Posterior vena cava (tissue), 2 donors: ENCODE measurements at regions of chr10 and their contacts with region 1.

Region 1: DNA sequence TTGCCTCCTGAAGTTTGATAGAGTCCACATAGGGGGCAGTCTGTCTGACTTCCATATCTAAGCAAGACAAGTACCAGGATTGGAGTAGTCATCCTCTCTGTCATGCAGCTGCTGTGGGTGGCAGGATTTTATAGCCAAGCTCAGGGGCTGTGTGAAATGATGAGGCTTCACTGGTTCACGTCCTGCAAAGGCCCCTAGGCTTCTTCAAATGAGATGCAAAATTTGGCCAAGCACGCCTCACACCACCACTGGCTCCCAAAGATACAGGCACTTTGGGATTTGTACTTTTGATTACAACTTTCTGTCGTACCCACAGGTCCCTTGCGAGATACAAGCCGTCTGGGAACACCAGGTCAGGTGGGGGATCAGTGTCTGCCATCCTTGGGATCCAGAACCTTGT is 67.1 kb downstream of the WDFY4 start:
- DNase-seq: no peak

Region 2: GRCh38 chr10:48634198-48634983 is 117.3 kb before region 1 on chr10:
- intact Hi-C with region 1: no loop called
- DNase-seq: peak; percentile 88

Region 3: DNA sequence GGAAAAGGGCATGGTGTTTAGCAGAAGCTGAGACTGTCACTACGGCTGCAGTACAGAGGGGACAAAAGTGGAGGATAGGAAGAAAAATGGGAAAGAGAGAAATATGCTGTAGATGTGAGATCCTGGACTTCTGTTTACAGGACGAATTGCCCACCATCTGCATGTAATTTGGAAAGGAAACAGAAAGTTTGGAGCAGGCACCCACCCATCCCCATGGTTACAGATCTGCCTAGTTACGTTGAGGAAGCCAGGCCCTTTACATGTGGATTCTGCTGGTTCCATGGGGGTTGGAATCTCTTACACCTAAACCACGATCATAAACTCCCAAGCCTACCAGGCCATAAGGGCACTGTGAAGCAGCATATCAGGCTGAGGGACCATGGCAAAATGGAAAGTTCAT is 17.2 kb after region 1 on chr10:
- intact Hi-C with region 1: loop called in 1 of 2 experiments (anchors 1 kb)
- DNase-seq: no peak